Transverse colon (tissue), 4 donors: ENCODE measurements at regions of chr3 and their contacts with region 1.

Region 1: DNA sequence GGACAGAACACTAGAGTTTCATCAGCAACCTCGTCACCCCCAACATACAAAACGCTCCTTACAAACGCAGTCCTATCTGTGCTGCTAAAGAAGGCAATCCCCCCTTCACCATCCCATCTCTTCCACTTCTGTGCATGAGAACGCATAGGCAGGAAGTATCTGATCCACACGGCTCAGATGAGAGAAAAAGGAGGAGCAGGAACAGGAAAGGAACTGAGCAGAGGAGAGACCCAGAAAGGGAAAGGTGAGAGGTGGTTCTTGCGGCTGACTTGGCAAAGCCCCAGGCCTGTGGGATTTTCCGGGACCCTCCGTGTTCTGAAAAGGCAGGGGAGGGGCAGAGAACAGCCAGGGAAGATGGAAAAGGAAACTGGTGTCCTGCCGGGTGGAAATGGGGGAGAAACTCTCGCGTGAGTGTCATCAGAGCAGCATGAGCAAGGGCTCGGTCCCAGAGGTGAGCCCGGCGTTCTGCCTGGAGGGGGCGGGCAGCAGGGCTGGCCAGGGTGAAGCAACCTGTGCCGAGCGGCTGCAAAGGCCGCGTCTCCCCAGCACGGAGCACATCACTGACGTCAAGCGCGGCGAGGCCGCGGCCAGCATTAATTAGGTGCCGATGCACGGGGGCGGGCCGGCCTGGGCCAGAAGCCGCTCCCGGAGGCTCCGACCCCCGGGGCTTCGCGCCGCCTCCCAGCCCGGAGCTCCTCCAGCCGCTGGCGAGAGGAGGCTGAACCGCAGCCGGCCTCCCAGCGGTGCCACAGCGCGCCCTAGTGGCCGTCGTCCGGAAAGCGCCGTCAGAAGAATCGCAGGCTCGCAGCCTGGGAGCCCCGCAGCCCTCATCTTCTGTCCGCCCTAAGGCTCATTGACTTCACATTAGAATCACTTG is 35.8 kb downstream of the CPN2 start:
- DNase-seq: peak; percentile 88
- H3K4me3 ChIP-seq: peak overlapping the region; percentile 0 to 57 (median 42)
- H3K27ac ChIP-seq: peak overlapping the region; percentile 49 to 69 (median 56)
- H3K4me1 ChIP-seq: peaks cover 4 to 28% (median 21%) of the 10 kb centered on the region in 4 donors
- H3K27me3 ChIP-seq: peaks cover 11% of the 10 kb centered on the region
- CTCF ChIP-seq: peak; percentile 93 to 98 (median 96)
- EP300 ChIP-seq: no peak
- POLR2A ChIP-seq: no peak

Region 2: GRCh38 chr3:193780810-193781472 is 534.4 kb before region 1 on chr3:
- in situ Hi-C with region 1: loop called (anchors 5 to 10 kb)
- intact Hi-C with region 1: loop called (anchors 5 kb)
- DNase-seq: peak; percentile 74
- H3K4me3 ChIP-seq: no peak overlapping the region
- H3K27ac ChIP-seq: peak overlapping the region in 3 of 4 donors; percentile 42 to 49 (median 46)
- H3K4me1 ChIP-seq: peaks cover 6 to 27% (median 17%) of the 10 kb centered on the region in 4 donors
- H3K27me3 ChIP-seq: no peaks in the 10 kb centered on the region
- CTCF ChIP-seq: peak; percentile 73 to 86 (median 76)
- EP300 ChIP-seq: no peak
- POLR2A ChIP-seq: no peak

Region 3: GRCh38 chr3:193982258-193982659 is 333.1 kb before region 1 on chr3:
- in situ Hi-C with region 1: loop called in 1 of 4 experiments (anchors 25 kb)
- intact Hi-C with region 1: no loop called
- DNase-seq: peak; percentile 89
- H3K4me3 ChIP-seq: no peak overlapping the region
- H3K27ac ChIP-seq: peak overlapping the region in 2 of 4 donors; percentile 11 to 60
- H3K4me1 ChIP-seq: peaks cover 0 to 23% (median 15%) of the 10 kb centered on the region in 4 donors
- H3K27me3 ChIP-seq: no peaks in the 10 kb centered on the region
- CTCF ChIP-seq: no peak
- EP300 ChIP-seq: no peak
- POLR2A ChIP-seq: no peak

Region 4: DNA sequence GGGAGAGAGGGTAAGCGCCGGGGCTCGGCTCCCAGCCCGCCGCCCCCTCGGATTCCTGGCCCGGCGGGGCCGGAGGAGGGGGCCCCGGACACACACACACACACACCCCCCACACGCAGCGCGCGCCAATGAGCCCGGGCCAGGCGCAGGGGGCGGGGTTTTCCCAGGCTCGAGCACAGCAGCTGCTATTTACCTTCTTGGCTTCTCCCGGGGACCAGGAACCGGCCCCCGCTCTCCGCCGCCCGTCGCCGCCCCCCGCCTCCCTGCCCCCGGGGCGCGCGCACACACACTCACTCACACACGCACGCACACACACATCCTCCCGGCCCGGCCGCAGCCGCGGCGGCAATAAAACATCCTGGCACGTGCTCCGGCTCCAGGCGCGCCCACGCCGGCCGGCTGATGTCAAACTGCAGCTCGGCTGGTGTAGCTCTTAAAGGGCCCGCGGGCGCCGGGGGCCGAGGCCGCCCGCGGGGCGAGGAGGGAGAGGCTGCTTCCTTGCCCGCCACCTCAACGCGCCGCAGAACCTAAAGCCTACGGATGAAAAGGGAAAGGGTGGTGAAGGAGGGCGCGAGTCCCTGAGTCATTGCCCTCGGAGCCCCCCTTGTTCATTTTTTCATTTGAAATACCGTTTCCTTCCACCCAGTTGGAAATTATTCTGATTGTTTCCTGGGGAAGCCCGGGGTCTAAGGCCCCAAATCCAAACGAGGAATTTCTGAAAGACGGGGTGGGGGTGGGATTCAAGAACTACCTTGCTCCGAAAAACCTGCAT is 180.4 kb before region 1 on chr3:
- in situ Hi-C with region 1: loop called in 2 of 4 experiments (anchors 5 to 25 kb)
- intact Hi-C with region 1: loop called (anchors 2 kb)
- DNase-seq: peak; percentile 93
- H3K4me3 ChIP-seq: peak overlapping the region; percentile 50 to 73 (median 58)
- H3K27ac ChIP-seq: peak overlapping the region; percentile 95 to 97 (median 96)
- H3K4me1 ChIP-seq: peaks cover 11 to 76% (median 54%) of the 10 kb centered on the region in 4 donors
- H3K27me3 ChIP-seq: no peaks in the 10 kb centered on the region
- CTCF ChIP-seq: no peak
- EP300 ChIP-seq: peak; percentile 86
- POLR2A ChIP-seq: peak; percentile 64

Region 5: DNA sequence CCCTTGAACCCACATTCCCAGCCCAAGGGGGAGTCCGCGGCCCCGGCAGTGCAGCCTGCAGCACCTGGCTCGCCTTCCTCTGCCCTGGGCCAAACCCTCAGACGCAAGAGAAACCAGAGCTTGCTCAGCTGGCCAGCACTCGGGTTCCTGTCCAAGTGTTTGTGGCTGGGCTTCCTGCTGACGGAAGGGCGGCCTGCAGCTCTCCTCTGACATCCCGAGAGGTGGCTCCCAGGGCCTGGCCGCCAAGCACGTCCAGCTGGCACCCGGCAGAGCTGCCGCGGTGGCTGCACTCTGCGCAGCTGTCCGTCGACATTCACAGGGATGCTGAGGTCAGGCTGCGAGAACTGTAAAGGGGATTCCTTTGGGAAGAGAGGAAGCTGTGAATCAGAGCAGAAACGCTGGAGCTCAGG is 49.8 kb before region 1 on chr3:
- in situ Hi-C with region 1: no loop called
- intact Hi-C with region 1: loop called (anchors 2 kb)
- DNase-seq: peak; percentile 60
- H3K4me3 ChIP-seq: no peak overlapping the region
- H3K27ac ChIP-seq: peak overlapping the region; percentile 62 to 79 (median 70)
- H3K4me1 ChIP-seq: peaks cover 13 to 25% (median 21%) of the 10 kb centered on the region in 4 donors
- H3K27me3 ChIP-seq: no peaks in the 10 kb centered on the region
- CTCF ChIP-seq: no peak
- EP300 ChIP-seq: no peak
- POLR2A ChIP-seq: no peak